Caco-2 (cell line): ENCODE measurements at regions of chr12 and their contacts with region 1.

Region 1: DNA sequence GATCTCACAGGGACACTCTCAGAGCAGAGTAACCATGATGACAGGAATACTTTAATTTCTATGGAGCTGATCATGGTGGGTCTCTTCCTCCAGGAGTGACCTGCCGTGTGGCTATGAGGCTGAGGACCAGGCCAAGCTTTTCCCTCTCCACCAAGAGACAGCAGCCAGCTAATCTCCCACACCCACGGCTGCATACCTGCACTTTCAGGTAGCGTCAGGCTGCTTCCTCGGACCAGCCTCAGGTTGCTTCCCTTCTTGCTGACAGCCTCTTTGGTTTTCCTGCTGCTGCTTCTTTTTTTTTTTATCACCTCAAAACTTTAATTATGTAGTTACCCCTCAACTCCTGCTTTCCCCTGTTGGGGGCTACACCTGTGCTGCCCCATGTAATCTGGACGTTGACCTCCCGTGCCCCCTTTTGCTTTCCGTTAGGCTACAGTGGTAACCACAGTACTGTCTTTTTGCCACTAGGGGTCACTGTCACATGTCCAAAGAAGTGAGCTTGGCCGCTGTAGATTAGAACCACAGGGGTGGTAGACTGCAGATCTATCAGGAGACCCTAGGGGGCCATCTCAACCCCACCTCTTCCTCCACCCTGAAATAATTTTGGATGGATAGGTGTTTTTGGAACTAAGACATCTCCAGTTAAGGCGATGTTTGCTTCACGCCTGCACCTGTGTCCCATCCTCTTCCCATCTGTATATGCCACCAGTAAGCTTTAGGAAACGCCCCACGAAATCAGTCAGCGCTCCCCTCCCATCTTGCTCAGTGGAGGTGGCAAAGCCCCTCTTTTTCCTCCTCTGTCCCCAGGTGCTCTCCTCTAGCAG is 7.8 kb upstream of the PIP4K2C start:
- DNase-seq: peak; percentile 80 to 83
- H3K4me3 ChIP-seq: no peak overlapping the region
- H3K4me3 Mint-ChIP-seq: no peak overlapping the region
- H3K27ac Mint-ChIP-seq: no peak overlapping the region
- H3K4me1 ChIP-seq: peaks cover 13% of the 10 kb centered on the region
- H3K4me1 Mint-ChIP-seq: peaks cover 16% of the 10 kb centered on the region
- H3K27me3 ChIP-seq: no peaks in the 10 kb centered on the region
- H3K27me3 Mint-ChIP-seq: peaks cover 4% of the 10 kb centered on the region
- CTCF ChIP-seq: peak; percentile 94 to 96

Region 2: DNA sequence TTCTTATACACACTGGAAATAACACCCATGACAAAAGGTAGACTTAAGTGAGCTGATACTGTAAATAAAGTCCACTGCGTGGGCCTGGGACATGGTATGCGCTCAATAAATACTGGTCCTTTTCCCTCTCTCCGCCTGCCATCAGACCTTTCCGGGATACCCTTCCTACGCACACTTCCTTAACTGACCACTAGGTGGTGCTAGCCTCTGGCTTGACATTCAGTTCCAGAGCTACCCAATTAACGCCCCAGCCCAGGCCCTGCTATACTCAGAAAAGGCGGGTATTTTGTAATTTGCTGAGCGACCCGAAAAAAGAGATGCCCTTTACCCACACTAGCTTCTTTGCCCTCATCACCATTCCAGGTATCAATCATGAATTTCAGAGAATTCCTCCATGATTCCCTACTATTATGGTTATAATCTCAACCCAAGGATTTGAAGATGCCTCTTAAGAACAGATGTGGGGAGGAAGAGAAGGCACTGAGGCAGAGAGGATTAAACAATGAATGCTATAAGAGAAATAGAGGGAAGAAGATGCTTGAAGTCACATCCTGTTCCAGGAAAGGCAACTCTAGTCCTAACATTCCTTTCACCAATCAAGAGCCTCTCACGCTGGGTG is 458.9 kb before region 1 on chr12:
- CTCF ChIA-PET with region 1: no interaction called
- POLR2A ChIA-PET with region 1: no interaction called
- intact Hi-C with region 1: no loop called
- DNase-seq: peak; percentile 75 to 82
- H3K4me3 ChIP-seq: no peak overlapping the region
- H3K4me3 Mint-ChIP-seq: no peak overlapping the region
- H3K27ac Mint-ChIP-seq: no peak overlapping the region
- H3K4me1 ChIP-seq: peaks cover 8% of the 10 kb centered on the region
- H3K4me1 Mint-ChIP-seq: peaks cover 8% of the 10 kb centered on the region
- H3K27me3 ChIP-seq: no peaks in the 10 kb centered on the region
- H3K27me3 Mint-ChIP-seq: no peaks in the 10 kb centered on the region
- CTCF ChIP-seq: peak; percentile 86 to 88

Region 3: DNA sequence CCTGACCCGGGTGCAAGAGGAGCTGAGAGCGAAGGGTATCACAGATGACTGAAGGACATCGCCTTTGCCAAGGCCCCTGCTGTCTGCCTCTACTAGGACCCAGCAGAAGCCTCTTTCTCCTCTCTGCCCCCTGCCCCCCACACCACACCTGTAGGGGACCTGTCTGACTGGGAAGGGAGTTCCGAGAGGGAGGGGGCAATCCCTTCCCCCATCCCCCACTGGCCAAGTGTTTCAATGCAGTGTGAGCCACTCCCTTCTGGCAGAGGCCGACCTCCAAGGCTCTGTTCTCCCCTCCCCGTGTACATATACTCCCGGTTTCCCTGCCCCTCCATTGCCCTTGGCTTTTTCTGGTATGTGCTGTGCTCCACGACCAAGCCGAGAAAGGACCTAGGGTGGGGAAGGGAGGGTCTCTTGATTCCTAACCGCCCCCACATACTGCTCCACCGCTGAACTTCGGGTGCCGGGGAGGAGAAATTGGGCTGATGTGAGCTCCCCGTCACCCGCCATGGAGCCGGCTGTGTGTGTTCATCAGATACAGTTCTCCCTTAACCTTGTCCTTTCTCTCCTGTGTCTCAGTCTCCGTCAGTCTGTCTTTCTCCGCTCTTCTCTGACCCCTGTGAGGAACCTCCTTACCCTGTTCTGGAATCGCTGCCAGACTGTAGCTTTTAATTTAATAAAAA is 26.0 kb after region 1 on chr12:
- CTCF ChIA-PET with region 1: interaction called, 10 read pairs
- POLR2A ChIA-PET with region 1: no interaction called
- intact Hi-C with region 1: no loop called
- DNase-seq: no peak
- H3K4me3 ChIP-seq: no peak overlapping the region
- H3K4me3 Mint-ChIP-seq: no peak overlapping the region
- H3K27ac Mint-ChIP-seq: no peak overlapping the region
- H3K4me1 ChIP-seq: no peaks in the 10 kb centered on the region
- H3K4me1 Mint-ChIP-seq: no peaks in the 10 kb centered on the region
- H3K27me3 ChIP-seq: no peaks in the 10 kb centered on the region
- H3K27me3 Mint-ChIP-seq: no peaks in the 10 kb centered on the region
- CTCF ChIP-seq: no peak

Region 4: GRCh38 chr12:57621497-57622292 is 38.5 kb after region 1 on chr12:
- CTCF ChIA-PET with region 1: interaction called, 20 read pairs
- POLR2A ChIA-PET with region 1: no interaction called
- intact Hi-C with region 1: loop called (anchors 1 kb)
- DNase-seq: peak; percentile 59 to 81
- H3K4me3 ChIP-seq: peak overlapping the region; percentile 34
- H3K4me3 Mint-ChIP-seq: peak overlapping the region; percentile 75
- H3K27ac Mint-ChIP-seq: no peak overlapping the region
- H3K4me1 ChIP-seq: no peaks in the 10 kb centered on the region; the same call in 1 of the 2 replicates
- H3K4me1 Mint-ChIP-seq: peaks cover 7% of the 10 kb centered on the region
- H3K27me3 ChIP-seq: peaks cover 4% of the 10 kb centered on the region
- H3K27me3 Mint-ChIP-seq: peaks cover 26% of the 10 kb centered on the region
- CTCF ChIP-seq: peak; percentile 85 to 94

Region 5: GRCh38 chr12:57632694-57633477 is 49.7 kb after region 1 on chr12 and contains the start of gene B4GALNT1:
- CTCF ChIA-PET with region 1: interaction called, 17 read pairs
- POLR2A ChIA-PET with region 1: no interaction called
- intact Hi-C with region 1: no loop called
- DNase-seq: peak in 1 of 2 experiments; percentile 82
- H3K4me3 ChIP-seq: peak within 1 kb of the TSS; percentile 49
- H3K4me3 Mint-ChIP-seq: peak within 1 kb of the TSS; percentile 49
- H3K27ac Mint-ChIP-seq: no peak within 1 kb of the TSS
- H3K4me1 ChIP-seq: no peaks in the 10 kb centered on the region
- H3K4me1 Mint-ChIP-seq: peaks cover 5% of the 10 kb centered on the region
- H3K27me3 ChIP-seq: no peaks in the 10 kb centered on the region
- H3K27me3 Mint-ChIP-seq: no peaks in the 10 kb centered on the region
- CTCF ChIP-seq: peak; percentile 85 to 90
- total RNA-seq, gene B4GALNT1: 4.2 and 5.7 TPM in 2 replicates

Region 6: DNA sequence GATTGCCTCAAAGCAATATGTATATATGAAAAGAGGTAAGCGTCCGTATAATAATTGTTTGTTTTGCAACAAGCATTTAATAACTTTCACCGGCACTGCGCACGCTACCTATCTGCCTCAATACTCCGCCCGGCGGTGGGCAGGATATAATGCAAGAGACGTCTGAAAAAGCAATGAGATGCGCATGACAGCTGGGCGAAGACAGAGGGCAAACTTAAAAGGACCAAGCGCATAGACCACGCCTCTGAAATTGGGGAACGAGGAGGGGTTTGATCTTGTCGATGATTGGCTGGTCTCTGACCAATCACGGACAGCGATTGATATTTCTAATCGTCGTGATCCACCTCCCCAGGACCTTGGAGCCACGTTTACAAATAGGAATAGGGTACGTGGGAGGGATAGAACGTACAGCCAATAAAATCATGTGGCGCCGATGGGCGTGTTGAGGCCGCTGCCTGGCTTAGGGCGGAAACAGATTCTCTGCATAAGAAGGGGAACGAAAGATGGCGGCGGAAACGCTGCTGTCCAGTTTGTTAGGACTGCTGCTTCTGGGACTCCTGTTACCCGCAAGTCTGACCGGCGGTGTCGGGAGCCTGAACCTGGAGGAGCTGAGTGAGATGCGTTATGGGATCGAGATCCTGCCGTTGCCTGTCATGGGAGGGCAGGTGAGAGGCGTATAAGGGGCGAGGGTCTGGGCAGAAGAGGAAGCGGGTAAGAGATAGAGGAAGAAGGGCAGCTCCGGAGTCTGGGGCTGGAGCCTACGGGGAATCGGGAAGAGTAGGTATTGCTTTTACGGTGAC is 110.6 kb after region 1 on chr12 and contains the start of gene OS9:
- CTCF ChIA-PET with region 1: interaction called, 6 read pairs
- POLR2A ChIA-PET with region 1: no interaction called
- intact Hi-C with region 1: loop called (anchors 5 kb)
- DNase-seq: peak; percentile 95 to 99
- H3K4me3 ChIP-seq: peak within 1 kb of the TSS; percentile 81
- H3K4me3 Mint-ChIP-seq: no peak within 1 kb of the TSS
- H3K27ac Mint-ChIP-seq: no peak within 1 kb of the TSS
- H3K4me1 ChIP-seq: peaks cover 9% of the 10 kb centered on the region
- H3K4me1 Mint-ChIP-seq: peaks cover 8% of the 10 kb centered on the region
- H3K27me3 ChIP-seq: no peaks in the 10 kb centered on the region
- H3K27me3 Mint-ChIP-seq: no peaks in the 10 kb centered on the region
- CTCF ChIP-seq: peak; percentile 72 to 74
- total RNA-seq, gene OS9: 169 and 182 TPM in 2 replicates

Region 7: GRCh38 chr12:57726151-57726883 is 143.1 kb after region 1 on chr12:
- CTCF ChIA-PET with region 1: interaction called, 11 read pairs
- POLR2A ChIA-PET with region 1: no interaction called
- intact Hi-C with region 1: no loop called
- DNase-seq: peak; percentile 83 to 91
- H3K4me3 ChIP-seq: peak overlapping the region; percentile 55
- H3K4me3 Mint-ChIP-seq: peak overlapping the region; percentile 85
- H3K27ac Mint-ChIP-seq: peak overlapping the region; percentile 45
- H3K4me1 ChIP-seq: no peaks in the 10 kb centered on the region
- H3K4me1 Mint-ChIP-seq: no peaks in the 10 kb centered on the region
- H3K27me3 ChIP-seq: no peaks in the 10 kb centered on the region
- H3K27me3 Mint-ChIP-seq: peaks cover 12% of the 10 kb centered on the region
- CTCF ChIP-seq: peak; percentile 76 to 89

Region 8: DNA sequence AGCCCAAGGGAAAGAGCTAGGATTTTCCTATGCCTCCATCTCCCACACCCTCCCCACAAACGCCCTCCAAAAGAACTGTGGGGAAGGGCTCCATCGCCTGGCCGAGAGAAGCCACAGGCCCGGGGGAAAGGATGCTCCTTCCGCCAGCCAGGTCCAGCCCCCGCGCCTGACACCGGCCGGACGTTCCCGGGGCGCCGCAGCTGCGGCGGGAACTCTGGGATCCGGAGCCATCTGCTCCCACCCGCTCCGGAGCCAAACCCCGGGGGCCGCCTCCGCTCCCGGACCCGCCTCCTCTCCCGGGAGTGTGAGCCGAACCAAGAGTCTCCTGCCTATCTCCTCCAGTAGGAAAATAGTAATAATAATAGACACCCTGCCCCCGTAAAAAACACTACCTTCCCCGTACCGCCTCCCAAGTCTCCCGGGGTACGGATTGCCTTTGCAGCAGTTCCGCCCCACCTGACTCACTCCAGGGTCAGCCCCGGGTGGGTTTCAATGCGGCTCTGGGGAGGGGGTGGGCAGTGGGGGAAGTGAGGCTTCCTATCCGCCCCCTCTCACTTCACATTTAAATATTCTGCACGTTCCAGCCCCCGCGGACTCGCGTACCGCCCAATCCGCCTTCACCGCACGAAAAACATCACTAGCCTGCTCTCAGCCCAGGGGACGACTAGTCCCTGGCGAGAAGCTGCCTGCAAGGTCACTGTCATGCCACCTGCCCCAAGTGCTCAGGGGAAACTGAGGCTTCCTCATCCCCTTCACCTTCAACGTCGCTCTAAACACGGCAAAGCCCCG is 152.9 kb after region 1 on chr12:
- CTCF ChIA-PET with region 1: interaction called, 8 read pairs
- POLR2A ChIA-PET with region 1: no interaction called
- intact Hi-C with region 1: loop called (anchors 1 kb)
- DNase-seq: peak in 1 of 2 experiments; percentile 69
- H3K4me3 ChIP-seq: peak overlapping the region; percentile 25
- H3K4me3 Mint-ChIP-seq: peak overlapping the region; percentile 68
- H3K27ac Mint-ChIP-seq: no peak overlapping the region
- H3K4me1 ChIP-seq: peaks cover 12% of the 10 kb centered on the region
- H3K4me1 Mint-ChIP-seq: peaks cover 17% of the 10 kb centered on the region
- H3K27me3 ChIP-seq: peaks cover 7% of the 10 kb centered on the region
- H3K27me3 Mint-ChIP-seq: peaks cover 36% of the 10 kb centered on the region
- CTCF ChIP-seq: peak; percentile 12 to 57

Region 9: DNA sequence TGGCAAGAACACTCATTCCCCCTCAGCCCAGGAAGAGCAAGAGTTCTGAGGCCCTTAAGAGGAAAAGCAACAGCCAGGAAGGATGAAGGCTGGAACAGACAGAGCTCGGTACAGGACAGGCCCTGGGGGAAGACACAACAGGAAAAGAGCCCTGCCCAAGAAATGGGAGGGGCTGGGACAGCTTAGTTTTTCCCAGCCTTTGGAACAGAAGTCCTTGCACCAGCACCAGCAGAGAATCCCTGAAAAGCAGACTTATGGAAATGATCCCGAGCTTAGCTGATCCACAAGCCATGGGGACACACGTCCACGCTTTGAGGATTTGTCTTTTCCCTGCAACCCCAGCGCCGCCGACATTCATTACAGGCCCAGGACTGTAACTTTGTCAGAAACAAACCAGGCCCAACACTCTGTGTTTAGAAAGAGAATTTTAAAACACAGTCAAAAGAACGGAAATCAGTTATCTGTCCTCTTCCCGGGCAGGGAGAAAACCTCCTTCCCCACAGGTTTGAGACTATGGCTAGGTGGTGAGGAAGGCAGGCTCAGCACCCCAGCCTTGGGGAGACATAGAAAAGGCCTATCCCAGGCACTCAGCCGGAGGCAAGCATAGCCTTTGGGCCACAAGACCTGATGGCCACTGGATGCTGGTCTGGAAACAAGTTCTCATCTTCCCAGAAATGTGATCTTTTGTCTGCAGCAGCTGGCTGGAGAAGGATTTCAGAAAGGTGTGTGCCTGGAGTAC is 239.3 kb after region 1 on chr12:
- CTCF ChIA-PET with region 1: no interaction called
- POLR2A ChIA-PET with region 1: no interaction called
- intact Hi-C with region 1: no loop called
- DNase-seq: no peak
- H3K4me3 ChIP-seq: no peak overlapping the region
- H3K4me3 Mint-ChIP-seq: no peak overlapping the region
- H3K27ac Mint-ChIP-seq: peak overlapping the region; percentile 15
- H3K4me1 ChIP-seq: no peaks in the 10 kb centered on the region
- H3K4me1 Mint-ChIP-seq: no peaks in the 10 kb centered on the region
- H3K27me3 ChIP-seq: no peaks in the 10 kb centered on the region
- H3K27me3 Mint-ChIP-seq: no peaks in the 10 kb centered on the region
- CTCF ChIP-seq: no peak